HepG2 (cell line): ENCODE measurements at regions of chr17 and their contacts with region 1.

Region 1: DNA sequence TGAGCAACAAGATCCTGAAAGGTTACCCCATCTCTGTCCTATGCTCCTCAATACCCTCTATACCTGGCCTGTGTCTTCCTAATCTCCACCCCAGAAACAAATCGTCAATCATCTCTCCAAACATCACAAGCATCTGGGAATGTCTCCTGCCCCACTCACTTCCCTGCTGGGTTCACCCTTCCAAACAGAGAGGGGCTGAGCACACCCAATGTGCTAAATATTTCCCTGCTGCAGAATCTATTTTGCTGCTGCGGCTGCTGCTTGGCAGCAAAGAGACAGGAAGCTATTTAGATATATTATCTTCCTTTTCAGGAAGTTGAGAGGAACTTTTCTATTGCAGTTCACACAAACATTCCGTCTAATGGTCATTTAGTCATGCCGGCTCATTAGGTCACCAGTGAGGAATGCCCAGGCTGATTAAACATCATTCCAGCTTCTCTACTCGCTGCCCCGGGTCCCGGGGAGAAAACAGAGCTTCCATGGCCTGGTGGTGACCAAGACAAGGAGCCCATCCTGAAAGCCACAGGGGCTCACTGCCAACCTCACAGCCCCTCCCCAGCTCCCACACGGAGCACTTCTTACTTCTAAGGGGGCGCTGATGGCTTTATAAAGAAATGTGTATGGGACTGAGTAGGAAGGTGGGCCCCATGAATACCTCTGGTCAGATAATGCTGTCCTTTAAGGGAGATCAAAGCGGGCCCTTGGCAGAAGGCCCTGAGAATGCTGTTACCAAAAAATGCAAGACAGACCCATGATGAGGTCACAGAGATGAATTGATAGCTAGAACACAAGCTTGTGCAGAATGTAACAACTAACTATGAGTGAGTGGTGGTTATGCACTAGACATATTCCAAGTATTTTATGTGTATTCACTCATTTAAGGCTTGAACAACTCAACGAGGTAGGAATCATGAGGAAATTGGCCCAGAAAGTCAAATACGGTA is 218.3 kb downstream of the SOX9 start:
- DNase-seq: peak; percentile 97
- ATAC-seq: peak; percentile 93
- H3K4me3 ChIP-seq: peak overlapping the region in 1 of 3 experiments; percentile 40; a peak in 2 of 6 replicates
- H3K27ac ChIP-seq: peak overlapping the region; percentile 81
- H3K4me1 ChIP-seq: peaks cover 55% of the 10 kb centered on the region
- H3K27me3 ChIP-seq: no peaks in the 10 kb centered on the region
- CTCF ChIP-seq: no peak
- EP300 ChIP-seq: peak; percentile 58 to 79
- POLR2A ChIP-seq: peak; percentile 17 to 30; a peak in 1 of 4 replicates
- RAD21 ChIP-seq: no peak

Region 2: DNA sequence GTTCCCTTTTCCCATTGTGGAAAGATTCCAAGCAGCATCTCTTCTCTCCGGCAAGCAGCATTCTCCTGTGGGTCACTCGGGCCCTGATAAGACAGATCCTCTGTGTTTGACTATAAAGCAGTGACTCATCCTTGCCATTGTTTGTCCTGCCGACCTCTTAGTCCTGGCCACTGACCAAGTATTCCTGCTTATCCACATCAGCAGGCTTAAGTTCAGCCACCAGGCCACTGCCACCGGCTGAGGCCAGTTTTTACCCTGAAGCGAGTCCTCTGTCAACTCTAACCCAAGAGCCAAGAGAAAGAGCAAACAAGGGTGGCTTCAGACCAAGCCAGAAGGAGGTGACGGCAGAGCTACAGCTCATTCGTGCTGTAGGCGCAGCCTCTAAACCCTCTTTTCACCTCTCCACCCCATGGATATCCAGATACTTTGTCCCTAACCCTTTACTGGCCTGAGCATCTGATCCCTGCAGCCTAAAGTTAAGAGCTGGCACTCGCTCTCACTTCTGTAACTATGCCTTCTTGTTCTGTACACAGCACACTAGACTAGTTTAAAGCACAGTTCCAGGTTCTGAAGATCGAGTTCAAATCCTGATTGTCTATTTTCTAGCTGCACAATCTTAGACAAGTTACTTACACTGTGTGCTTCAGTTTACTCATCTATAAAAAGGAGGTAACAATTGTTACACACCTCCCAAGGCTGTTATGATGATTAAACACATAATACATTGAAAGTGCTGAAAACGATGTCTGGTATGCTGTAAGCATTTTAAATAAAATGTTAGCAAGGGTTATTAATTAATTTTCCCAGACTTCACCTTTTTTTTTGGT is 187.3 kb before region 1 on chr17:
- CTCF ChIA-PET with region 1: no interaction called
- POLR2A ChIA-PET with region 1: interaction called, 3 read pairs
- in situ Hi-C with region 1: no loop called
- intact Hi-C with region 1: loop called (anchors 10 kb)
- DNase-seq: peak; percentile 97
- ATAC-seq: peak; percentile 99
- H3K4me3 ChIP-seq: peak overlapping the region in 1 of 3 experiments; percentile 41; a peak in 2 of 6 replicates
- H3K27ac ChIP-seq: peak overlapping the region; percentile 14
- H3K4me1 ChIP-seq: peaks cover 29% of the 10 kb centered on the region
- H3K27me3 ChIP-seq: peaks cover 0 to 6% of the 10 kb centered on the region in 2 experiments; a peak in 1 of 5 replicates
- CTCF ChIP-seq: peak; percentile 27
- EP300 ChIP-seq: peak; percentile 58 to 66
- POLR2A ChIP-seq: no peak
- RAD21 ChIP-seq: peak; percentile 40; the same call in 1 of the 2 replicates

Region 3: GRCh38 chr17:72318131-72318530 is 21.0 kb before region 1 on chr17:
- CTCF ChIA-PET with region 1: no interaction called
- POLR2A ChIA-PET with region 1: interaction called, 17 read pairs
- in situ Hi-C with region 1: no loop called
- intact Hi-C with region 1: no loop called
- DNase-seq: no peak
- ATAC-seq: no peak
- H3K4me3 ChIP-seq: no peak overlapping the region
- H3K27ac ChIP-seq: no peak overlapping the region
- H3K4me1 ChIP-seq: peaks cover 26% of the 10 kb centered on the region
- H3K27me3 ChIP-seq: no peaks in the 10 kb centered on the region
- CTCF ChIP-seq: no peak
- EP300 ChIP-seq: no peak
- POLR2A ChIP-seq: no peak
- RAD21 ChIP-seq: no peak

Region 4: GRCh38 chr17:72407336-72407909 is 68.3 kb after region 1 on chr17:
- CTCF ChIA-PET with region 1: no interaction called
- POLR2A ChIA-PET with region 1: interaction called, 13 read pairs
- in situ Hi-C with region 1: loop called (anchors 5 kb)
- intact Hi-C with region 1: loop called (anchors 2 kb)
- DNase-seq: no peak
- ATAC-seq: no peak
- H3K4me3 ChIP-seq: no peak overlapping the region
- H3K27ac ChIP-seq: peak overlapping the region; percentile 29
- H3K4me1 ChIP-seq: peaks cover 100% of the 10 kb centered on the region
- H3K27me3 ChIP-seq: no peaks in the 10 kb centered on the region
- CTCF ChIP-seq: no peak
- EP300 ChIP-seq: no peak
- POLR2A ChIP-seq: no peak
- RAD21 ChIP-seq: no peak

Region 5: DNA sequence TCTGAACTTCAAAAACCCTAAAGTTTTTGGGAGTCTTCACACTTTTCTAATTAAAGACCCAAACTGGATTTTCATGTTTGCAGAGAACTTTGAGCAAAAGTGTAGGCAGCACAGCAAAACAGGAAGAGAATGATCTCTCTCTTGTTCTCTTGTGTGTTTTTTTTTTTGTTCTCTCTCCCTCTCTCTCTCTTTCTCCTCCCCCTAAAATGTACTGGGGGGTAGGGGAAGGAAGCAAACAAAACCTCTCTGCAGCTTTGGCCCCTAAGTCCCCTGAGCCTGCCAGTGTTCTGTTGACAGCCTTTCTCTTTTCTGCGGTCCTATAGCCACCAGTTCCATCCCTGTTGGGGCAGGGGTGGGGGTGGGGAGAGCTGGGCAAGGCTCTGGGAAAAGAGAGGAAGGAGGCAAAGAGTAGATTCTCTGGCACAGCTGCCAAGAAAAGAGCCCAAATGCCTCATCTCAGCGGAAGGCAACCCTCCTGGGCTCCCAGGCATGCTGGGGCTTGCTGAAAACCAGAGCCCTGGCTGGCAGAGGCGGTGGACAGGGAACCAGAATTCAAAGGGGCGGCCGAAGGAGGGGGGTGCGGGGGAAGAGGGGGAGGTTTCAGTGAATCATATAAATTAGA is 77.0 kb after region 1 on chr17:
- CTCF ChIA-PET with region 1: no interaction called
- POLR2A ChIA-PET with region 1: interaction called, 13 read pairs
- in situ Hi-C with region 1: no loop called
- intact Hi-C with region 1: loop called (anchors 2 kb)
- DNase-seq: no peak
- ATAC-seq: no peak
- H3K4me3 ChIP-seq: no peak overlapping the region
- H3K27ac ChIP-seq: peak overlapping the region; percentile 89
- H3K4me1 ChIP-seq: peaks cover 89% of the 10 kb centered on the region
- H3K27me3 ChIP-seq: no peaks in the 10 kb centered on the region
- CTCF ChIP-seq: no peak
- EP300 ChIP-seq: no peak; a peak in 1 of 4 replicates
- POLR2A ChIP-seq: no peak
- RAD21 ChIP-seq: no peak

Region 6: DNA sequence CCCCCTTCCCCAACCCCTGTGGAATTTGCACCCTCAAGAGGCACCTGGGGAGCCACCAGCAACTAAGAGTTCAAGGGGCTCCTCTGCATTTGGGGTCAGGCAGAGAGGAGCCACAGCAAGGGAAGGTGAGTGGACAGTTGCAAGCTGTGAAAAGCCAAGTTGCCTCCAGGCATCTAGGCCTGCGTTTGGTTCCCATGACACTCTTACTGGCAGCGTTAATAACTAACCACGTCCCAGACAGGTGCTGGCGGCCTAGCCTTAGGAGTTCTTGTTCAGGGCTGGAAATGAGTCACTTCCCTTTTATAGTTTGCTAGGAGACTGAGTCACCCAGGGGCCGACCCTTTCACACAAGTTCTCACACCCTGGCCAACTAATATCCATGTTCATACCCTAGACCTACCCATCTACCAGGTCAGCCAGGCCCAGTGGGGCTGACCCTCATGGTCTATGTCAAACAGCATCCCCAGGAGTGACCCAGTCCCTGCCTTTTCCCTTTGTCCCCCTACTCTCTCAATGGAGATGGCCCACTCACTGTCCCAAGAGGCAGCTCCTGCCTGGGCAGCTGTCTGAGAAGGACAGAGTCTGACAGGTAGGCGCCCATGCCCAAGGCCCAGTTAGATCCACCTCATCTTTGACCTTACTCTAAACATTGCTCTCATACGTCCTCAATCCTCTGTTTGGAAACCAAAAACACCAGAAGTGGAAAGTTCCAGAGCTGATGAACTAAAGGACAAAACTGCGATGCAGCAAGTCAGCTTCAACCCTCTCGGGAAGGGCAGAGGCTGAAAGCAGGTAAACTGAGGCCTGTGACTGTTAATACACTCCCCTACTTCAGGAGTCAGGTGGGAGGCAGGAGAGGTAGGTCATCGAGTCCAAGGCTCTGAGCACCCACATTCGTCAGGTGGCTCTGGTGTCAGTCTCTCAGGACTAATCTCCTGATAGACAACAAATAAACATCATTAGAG is 82.3 kb after region 1 on chr17:
- CTCF ChIA-PET with region 1: no interaction called
- POLR2A ChIA-PET with region 1: interaction called, 36 read pairs
- in situ Hi-C with region 1: no loop called
- intact Hi-C with region 1: no loop called
- DNase-seq: peak; percentile 99
- ATAC-seq: peak; percentile 91
- H3K4me3 ChIP-seq: peak overlapping the region in 1 of 3 experiments; percentile 31; a peak in 2 of 6 replicates
- H3K27ac ChIP-seq: peak overlapping the region; percentile 83
- H3K4me1 ChIP-seq: peaks cover 86% of the 10 kb centered on the region
- H3K27me3 ChIP-seq: no peaks in the 10 kb centered on the region
- CTCF ChIP-seq: no peak
- EP300 ChIP-seq: peak in 1 of 2 experiments; percentile 92; a peak in 3 of 4 replicates
- POLR2A ChIP-seq: peak; percentile 48 to 68
- RAD21 ChIP-seq: peak; percentile 34

Region 7: GRCh38 chr17:72515291-72516065 is 176.4 kb after region 1 on chr17:
- CTCF ChIA-PET with region 1: no interaction called
- POLR2A ChIA-PET with region 1: no interaction called
- in situ Hi-C with region 1: no loop called
- intact Hi-C with region 1: loop called (anchors 1 kb)
- DNase-seq: no peak
- ATAC-seq: no peak
- H3K4me3 ChIP-seq: no peak overlapping the region
- H3K27ac ChIP-seq: no peak overlapping the region
- H3K4me1 ChIP-seq: peaks cover 87% of the 10 kb centered on the region
- H3K27me3 ChIP-seq: no peaks in the 10 kb centered on the region
- CTCF ChIP-seq: no peak
- EP300 ChIP-seq: no peak
- POLR2A ChIP-seq: no peak
- RAD21 ChIP-seq: no peak